ENCODE measurements at regions of chr2 and their contacts with region 1.

Region 1: DNA sequence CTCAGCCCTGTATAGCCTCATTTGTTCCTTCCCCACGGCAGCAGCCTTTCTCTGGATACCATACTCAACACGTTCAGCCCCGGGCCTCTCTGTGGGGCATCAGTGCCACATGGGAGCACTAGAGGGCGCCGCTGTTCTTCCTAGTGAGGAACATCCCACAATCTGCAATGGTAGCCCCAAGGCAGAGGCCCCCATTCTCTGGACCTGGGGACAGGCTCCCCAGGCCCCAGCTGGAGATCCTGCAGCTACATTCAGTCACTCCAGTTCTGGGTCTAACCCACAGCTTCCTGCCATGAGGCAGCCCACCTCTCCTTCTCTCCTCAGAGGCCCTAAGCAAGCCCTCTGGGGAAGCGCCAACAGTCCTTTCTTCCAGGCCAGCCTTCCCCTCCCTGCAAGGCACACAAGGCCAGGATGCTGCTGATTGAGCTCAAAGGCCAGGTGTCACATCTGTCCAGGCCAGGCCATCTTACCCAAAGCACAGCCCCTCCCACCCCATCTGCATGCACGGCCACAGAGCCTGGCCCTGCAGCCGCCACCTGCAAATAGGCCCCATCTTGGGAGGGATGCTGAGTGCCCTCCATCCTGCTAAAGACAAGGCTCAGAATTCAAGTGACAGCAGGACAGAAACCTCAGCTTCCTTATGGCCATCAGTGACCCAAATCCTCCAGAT is 14.3 kb upstream of the SFXN5 start:
- DNase-seq: no peak
- H3K4me3 ChIP-seq: no peak overlapping the region; the same call in 1 of the 2 replicates
- CTCF ChIP-seq: peak; percentile 96

Region 2: DNA sequence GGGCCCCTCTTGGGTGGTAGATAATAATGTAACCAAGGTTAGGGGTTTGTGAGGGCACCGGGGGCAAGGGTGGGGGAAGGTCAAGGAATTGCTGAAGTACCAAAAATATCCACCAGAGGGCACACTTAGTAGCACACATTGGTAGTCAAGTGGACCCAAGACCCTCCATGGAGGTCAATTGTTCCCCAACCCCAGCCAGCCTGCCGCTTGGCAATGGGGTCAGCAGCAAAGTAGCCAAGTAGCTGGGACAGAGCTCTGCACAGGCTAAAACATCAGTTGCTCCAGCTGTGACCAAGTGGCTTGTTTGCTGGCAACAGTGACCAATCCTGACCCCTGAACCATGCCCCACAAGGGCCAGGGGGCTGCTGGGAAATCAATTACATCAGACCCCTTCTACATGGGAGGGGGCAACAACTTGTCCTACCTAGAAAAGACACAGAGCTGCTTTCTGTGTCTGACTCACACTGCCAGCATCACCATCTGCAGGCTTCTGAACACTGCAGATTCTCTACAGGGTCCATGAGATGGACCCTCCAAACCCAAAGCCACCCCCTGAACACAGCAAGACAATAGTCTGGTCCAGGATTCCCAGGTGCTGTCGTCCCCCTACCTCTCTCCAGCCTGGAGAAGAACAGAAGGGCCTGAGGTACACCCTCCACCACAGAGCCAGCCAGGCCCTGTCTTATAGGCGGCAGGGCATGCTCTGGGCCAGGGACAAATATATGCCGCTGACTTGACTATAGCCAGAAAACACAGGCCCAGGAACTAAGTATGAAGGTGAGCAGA is 92.5 kb before region 1 on chr2:
- CTCF ChIA-PET with region 1: interaction called, 46 read pairs
- POLR2A ChIA-PET with region 1: no interaction called
- DNase-seq: no peak
- H3K4me3 ChIP-seq: no peak overlapping the region
- CTCF ChIP-seq: peak; percentile 66

Region 3: GRCh38 chr2:73071360-73072133 is 14.3 kb before region 1 on chr2 and contains the start of gene SFXN5:
- CTCF ChIA-PET with region 1: interaction called, 98 read pairs
- POLR2A ChIA-PET with region 1: interaction called, 3 read pairs
- DNase-seq: peak; percentile 69
- H3K4me3 ChIP-seq: peak within 1 kb of the TSS; percentile 84
- CTCF ChIP-seq: peak; percentile 16

Region 4: DNA sequence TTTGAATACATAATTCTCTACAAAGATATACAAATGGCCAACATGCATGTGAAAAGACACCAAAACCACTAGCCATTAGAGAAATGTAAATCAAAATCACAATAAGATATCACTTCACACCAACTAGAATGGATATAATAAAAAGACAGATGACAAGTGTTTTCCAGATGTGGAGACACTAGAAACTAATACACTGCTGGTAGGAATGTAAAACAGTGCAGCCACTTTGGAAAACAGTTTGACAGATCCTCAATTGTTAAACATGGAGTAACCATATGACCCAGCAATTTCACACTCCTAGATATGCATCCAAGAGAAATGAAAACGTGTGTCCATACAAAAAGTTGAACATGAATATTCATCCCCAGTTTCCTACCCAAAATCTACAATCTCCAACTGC is 36.7 kb after region 1 on chr2:
- CTCF ChIA-PET with region 1: interaction called, 11 read pairs
- POLR2A ChIA-PET with region 1: no interaction called
- DNase-seq: no peak
- H3K4me3 ChIP-seq: no peak overlapping the region
- CTCF ChIP-seq: no peak

Region 5: DNA sequence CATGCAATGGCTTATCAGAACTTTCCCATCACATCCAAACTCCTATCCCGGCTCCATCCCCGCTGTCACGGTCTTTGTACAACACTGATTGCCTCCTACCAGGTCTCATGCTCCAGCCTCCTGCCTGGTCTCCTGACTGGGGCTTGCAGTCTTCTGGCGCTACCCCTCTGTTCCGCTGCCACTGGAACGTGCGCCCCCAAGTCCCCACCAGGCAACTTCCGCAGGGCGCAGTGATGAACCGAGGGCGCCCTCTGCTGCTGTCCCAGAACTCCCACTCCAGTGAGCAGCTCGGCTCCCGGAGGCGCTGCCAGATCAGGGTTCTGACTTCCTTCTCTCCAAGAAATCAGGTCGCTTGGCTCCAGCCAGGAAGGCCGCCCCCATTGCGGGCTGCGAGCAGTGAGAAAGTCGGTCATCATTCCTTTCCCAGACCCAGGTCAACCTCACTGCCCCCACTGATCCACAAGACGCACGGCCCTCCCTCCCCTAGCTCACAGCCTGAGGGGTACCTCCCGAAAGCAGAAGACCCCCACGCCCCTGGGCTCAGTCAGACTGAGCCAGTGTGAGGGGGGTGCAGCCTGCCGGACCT is 70.8 kb after region 1 on chr2:
- CTCF ChIA-PET with region 1: interaction called, 502 read pairs
- POLR2A ChIA-PET with region 1: interaction called, 4 read pairs
- DNase-seq: no peak
- H3K4me3 ChIP-seq: peak overlapping the region; percentile 44
- CTCF ChIP-seq: peak; percentile 96

Region 6: GRCh38 chr2:73187549-73187948 is 101.7 kb after region 1 on chr2:
- CTCF ChIA-PET with region 1: no interaction called
- POLR2A ChIA-PET with region 1: no interaction called
- DNase-seq: no peak
- H3K4me3 ChIP-seq: no peak overlapping the region
- CTCF ChIP-seq: no peak

Region 7: DNA sequence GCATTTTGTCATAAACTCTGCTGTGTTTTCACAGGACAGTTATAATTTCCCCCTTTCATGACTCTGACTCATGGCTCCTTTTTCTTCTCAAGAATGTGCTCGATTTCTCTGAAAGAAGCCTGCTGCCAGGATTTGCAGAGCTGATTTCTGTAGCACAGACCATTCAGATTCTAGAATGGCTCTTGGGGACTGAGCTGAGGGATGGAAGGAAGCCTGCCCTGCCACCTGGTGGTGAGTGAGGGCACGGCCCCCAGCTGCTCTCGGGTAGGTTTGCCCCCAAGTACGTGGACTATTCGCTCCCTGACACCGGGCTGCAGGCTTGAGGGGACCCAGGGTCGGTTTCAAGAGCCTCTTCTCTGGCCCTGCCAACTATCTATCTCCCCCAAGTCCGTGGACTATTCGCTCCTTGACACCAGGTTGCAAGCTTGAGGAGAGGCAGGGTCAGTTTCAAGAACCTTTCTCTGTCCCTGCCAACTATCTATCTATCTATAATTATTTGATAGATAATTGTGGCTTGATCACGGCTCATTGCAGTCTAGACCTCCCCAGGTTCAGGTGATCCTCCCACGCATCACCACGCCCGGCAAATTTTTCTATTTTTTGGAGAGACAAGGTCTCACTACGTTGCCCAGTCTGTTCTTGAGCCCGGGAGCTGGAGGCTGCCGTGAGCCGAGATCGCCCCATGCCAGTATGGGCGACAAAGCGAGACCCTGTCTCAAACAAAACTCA is 126.8 kb after region 1 on chr2:
- CTCF ChIA-PET with region 1: interaction called, 19 read pairs
- POLR2A ChIA-PET with region 1: no interaction called
- DNase-seq: peak; percentile 65
- H3K4me3 ChIP-seq: no peak overlapping the region
- CTCF ChIP-seq: peak; percentile 96

Region 8: GRCh38 chr2:73373344-73373743 is 287.5 kb after region 1 on chr2:
- CTCF ChIA-PET with region 1: no interaction called
- POLR2A ChIA-PET with region 1: no interaction called
- DNase-seq: no peak
- H3K4me3 ChIP-seq: no peak overlapping the region
- CTCF ChIP-seq: no peak

Measured in AG04449 (cell line).